Activated T-helper 1 cell treated with anti-CD3 and anti-CD28 coated beads, Interleukin-12 subunit alpha, Interleukin-12 subunit beta, Interleukin-2, Interleukin-4 antibody, amounts not matched to agents 30 ng/mL and 10 ng/mL and 1 ng/mL, durations not matched to agents 14 hours and 24 hours and 36 hours (primary cell): ENCODE measurements at regions of chr4 and their contacts with region 1.

Region 1: GRCh38 chr4:22444813-22445212 is 71.1 kb downstream of the ADGRA3 start:
- DNase-seq: no peak
- H3K4me3 Mint-ChIP-seq: peak overlapping the region; percentile 78
- H3K27ac Mint-ChIP-seq: peak overlapping the region; percentile 93
- H3K4me1 Mint-ChIP-seq: peaks cover 36% of the 10 kb centered on the region
- H3K27me3 Mint-ChIP-seq: no peaks in the 10 kb centered on the region

Region 2: DNA sequence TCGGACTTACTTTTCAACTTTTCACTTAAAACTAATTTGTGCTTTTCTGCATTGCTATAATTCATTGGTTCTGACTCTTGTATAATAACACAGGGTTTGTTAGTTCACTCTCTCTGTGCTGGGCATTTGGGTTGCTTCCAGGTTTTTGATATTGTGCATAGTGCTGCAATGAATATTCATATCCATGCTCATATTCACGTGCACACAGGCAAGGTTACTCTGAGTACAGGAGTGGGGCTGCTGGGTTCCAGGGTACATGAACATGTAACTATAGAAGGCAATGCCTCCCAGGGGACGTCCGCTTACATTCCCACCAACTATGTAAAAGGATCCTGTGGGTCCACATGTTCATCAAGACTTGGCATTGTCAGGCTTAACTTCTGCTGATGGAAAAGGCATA is 46.1 kb before region 1 on chr4:
- intact Hi-C with region 1: no loop called
- DNase-seq: no peak
- H3K4me3 Mint-ChIP-seq: no peak overlapping the region
- H3K27ac Mint-ChIP-seq: no peak overlapping the region
- H3K4me1 Mint-ChIP-seq: peaks cover 5% of the 10 kb centered on the region
- H3K27me3 Mint-ChIP-seq: no peaks in the 10 kb centered on the region

Region 3: GRCh38 chr4:22416403-22416802 is 28.4 kb before region 1 on chr4:
- intact Hi-C with region 1: loop called (anchors 2 kb)
- DNase-seq: no peak
- H3K4me3 Mint-ChIP-seq: no peak overlapping the region
- H3K27ac Mint-ChIP-seq: peak overlapping the region; percentile 2
- H3K4me1 Mint-ChIP-seq: peaks cover 13% of the 10 kb centered on the region
- H3K27me3 Mint-ChIP-seq: no peaks in the 10 kb centered on the region

Region 4: GRCh38 chr4:22500831-22501719 is 56.3 kb after region 1 on chr4:
- intact Hi-C with region 1: loop called (anchors 1 kb)
- DNase-seq: no peak
- H3K4me3 Mint-ChIP-seq: peak overlapping the region; percentile 11
- H3K27ac Mint-ChIP-seq: peak overlapping the region; percentile 73
- H3K4me1 Mint-ChIP-seq: peaks cover 6% of the 10 kb centered on the region
- H3K27me3 Mint-ChIP-seq: no peaks in the 10 kb centered on the region

Region 5: DNA sequence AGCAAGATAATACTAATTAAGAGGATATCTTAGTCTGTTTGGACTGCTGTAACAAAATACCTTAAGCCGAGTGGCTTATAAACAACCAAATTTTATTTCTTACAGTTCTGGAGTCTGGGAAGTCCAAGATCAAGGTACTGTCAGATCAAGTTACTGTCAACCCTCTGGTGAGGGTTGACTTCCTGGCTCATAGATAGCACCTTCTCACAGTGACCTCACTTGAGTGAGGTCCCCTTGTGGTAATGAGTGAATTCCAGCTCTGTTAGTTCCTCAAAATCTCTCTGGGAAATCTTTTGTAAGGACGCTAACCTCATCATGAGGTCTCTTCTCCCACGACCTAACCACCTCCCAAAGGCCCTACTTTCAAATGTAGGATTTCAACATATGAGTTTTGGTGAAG is 108.0 kb after region 1 on chr4:
- intact Hi-C with region 1: no loop called
- DNase-seq: no peak
- H3K4me3 Mint-ChIP-seq: no peak overlapping the region
- H3K27ac Mint-ChIP-seq: no peak overlapping the region
- H3K4me1 Mint-ChIP-seq: no peaks in the 10 kb centered on the region
- H3K27me3 Mint-ChIP-seq: no peaks in the 10 kb centered on the region

Region 6: DNA sequence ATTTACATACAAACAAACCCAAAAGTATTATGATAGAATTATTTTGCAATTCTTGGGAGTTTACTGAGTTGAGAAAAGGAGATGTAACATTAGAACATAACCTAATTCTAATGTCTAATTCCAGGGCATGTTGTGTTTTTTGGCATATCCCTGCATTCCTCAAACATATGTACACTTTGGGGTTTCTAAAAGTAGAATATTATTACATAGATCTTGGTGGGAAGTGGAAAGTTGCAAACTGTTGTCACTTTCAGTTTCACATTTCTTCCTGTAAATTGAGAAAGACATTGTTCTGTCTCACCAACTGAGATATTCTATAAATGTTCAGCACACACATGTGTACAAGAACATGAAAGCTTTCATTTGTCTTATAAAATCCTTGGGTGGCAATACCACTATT is 223.5 kb after region 1 on chr4:
- intact Hi-C with region 1: loop called (anchors 1 kb)
- DNase-seq: no peak
- H3K4me3 Mint-ChIP-seq: no peak overlapping the region
- H3K27ac Mint-ChIP-seq: no peak overlapping the region
- H3K4me1 Mint-ChIP-seq: peaks cover 34% of the 10 kb centered on the region
- H3K27me3 Mint-ChIP-seq: peaks cover 2% of the 10 kb centered on the region

Region 7: GRCh38 chr4:23706972-23707651 is 1262.3 kb after region 1 on chr4:
- intact Hi-C with region 1: no loop called
- DNase-seq: no peak
- H3K4me3 Mint-ChIP-seq: no peak overlapping the region
- H3K27ac Mint-ChIP-seq: no peak overlapping the region
- H3K4me1 Mint-ChIP-seq: no peaks in the 10 kb centered on the region
- H3K27me3 Mint-ChIP-seq: no peaks in the 10 kb centered on the region